Transverse colon (tissue), 4 donors: ENCODE measurements at regions of chr10 and their contacts with region 1.

Region 1: DNA sequence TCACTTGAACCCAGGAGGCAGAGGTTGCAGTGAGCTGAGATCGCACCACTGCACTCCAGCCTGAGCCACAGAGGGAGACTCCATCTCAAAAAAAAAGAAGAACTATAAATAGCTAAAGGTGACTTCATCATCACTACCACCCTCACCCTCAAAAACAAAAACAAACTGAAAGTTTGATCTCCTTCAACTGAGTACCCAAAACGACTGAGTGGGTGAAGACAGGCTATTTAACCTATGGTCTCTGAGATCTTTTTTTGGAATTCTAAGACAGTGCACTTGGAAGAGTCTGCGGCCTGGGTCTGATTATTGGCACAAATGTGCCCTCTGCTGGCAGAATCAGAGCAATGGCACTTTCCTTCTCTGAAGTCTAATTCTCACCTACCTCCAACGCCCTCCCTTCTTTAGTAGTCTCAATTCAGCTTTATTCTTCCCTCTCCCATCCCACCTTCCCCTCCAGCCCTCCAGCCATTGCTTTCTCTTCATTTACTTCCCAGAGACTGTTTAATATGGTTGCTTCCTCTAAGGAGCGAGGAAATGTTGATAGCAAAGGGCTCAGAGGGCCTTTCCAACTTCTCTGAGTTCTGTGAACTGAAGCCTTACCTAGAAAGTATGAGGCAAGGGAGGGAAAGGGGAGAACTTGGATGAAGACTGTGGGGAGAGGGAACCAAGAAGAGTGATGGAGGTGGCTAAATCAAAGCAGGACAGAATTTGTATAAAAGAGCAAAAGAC is 2.9 kb upstream of the MYOZ1 start:
- DNase-seq: peak; percentile 64
- H3K4me3 ChIP-seq: no peak overlapping the region
- H3K27ac ChIP-seq: no peak overlapping the region
- H3K4me1 ChIP-seq: peaks cover 0 to 32% (median 16%) of the 10 kb centered on the region in 4 donors
- H3K27me3 ChIP-seq: no peaks in the 10 kb centered on the region
- CTCF ChIP-seq: peak; percentile 82 to 97 (median 88)
- EP300 ChIP-seq: no peak
- POLR2A ChIP-seq: no peak

Region 2: DNA sequence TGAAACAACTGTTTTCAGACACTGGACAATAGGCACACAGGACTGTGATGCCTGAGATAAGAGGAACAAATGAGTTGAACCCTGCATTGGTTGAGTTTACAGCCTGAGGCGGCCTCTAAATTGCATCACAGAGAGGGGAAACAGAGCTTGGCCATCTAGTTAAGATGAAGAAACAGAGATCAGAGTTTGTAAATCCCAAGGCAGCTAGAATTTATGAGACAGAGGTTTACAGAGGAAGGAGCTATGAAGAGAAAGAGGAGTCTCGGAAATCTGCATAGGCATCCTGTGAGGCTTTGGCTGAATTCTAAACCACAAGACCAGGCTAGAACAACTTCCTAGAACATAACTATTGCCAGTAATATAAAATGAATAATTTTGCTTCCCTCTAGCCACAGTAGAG is 791.7 kb before region 1 on chr10:
- in situ Hi-C with region 1: no loop called
- intact Hi-C with region 1: no loop called
- DNase-seq: no peak
- H3K4me3 ChIP-seq: no peak overlapping the region
- H3K27ac ChIP-seq: no peak overlapping the region
- H3K4me1 ChIP-seq: no peaks in the 10 kb centered on the region
- H3K27me3 ChIP-seq: no peaks in the 10 kb centered on the region
- CTCF ChIP-seq: no peak
- EP300 ChIP-seq: no peak
- POLR2A ChIP-seq: no peak

Region 3: DNA sequence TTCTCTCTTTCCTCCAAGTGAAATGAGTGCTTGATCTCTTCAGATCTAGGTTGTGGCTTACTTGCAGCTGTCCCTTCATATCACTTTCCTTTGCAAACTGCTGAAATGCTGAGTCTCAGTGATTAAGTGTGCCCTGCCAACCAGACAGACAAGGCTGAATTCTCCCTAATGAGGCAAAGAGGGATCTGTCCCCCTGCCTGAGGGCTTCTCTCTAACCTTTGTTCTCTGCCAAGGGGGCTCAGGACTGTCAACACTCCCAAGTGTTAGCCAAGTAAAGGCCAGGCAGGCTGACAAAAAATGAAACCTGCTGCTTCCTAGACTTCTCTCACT is 210.7 kb before region 1 on chr10 and contains the start of gene MSS51:
- in situ Hi-C with region 1: no loop called
- intact Hi-C with region 1: no loop called
- DNase-seq: no peak
- H3K4me3 ChIP-seq: no peak within 1 kb of the TSS
- H3K27ac ChIP-seq: no peak within 1 kb of the TSS
- H3K4me1 ChIP-seq: no peaks in the 10 kb centered on the region
- H3K27me3 ChIP-seq: no peaks in the 10 kb centered on the region
- CTCF ChIP-seq: no peak
- EP300 ChIP-seq: no peak
- POLR2A ChIP-seq: no peak
- total RNA-seq, gene MSS51: 1.4 to 2.4 (median 2.0) TPM

Region 4: GRCh38 chr10:73501651-73502050 is 142.5 kb before region 1 on chr10:
- in situ Hi-C with region 1: no loop called
- intact Hi-C with region 1: no loop called
- DNase-seq: no peak
- H3K4me3 ChIP-seq: no peak overlapping the region
- H3K27ac ChIP-seq: no peak overlapping the region
- H3K4me1 ChIP-seq: peaks cover under 1 to 2% (median 2%) of the 10 kb centered on the region in 4 donors
- H3K27me3 ChIP-seq: no peaks in the 10 kb centered on the region
- CTCF ChIP-seq: no peak
- EP300 ChIP-seq: no peak
- POLR2A ChIP-seq: no peak

Region 5: DNA sequence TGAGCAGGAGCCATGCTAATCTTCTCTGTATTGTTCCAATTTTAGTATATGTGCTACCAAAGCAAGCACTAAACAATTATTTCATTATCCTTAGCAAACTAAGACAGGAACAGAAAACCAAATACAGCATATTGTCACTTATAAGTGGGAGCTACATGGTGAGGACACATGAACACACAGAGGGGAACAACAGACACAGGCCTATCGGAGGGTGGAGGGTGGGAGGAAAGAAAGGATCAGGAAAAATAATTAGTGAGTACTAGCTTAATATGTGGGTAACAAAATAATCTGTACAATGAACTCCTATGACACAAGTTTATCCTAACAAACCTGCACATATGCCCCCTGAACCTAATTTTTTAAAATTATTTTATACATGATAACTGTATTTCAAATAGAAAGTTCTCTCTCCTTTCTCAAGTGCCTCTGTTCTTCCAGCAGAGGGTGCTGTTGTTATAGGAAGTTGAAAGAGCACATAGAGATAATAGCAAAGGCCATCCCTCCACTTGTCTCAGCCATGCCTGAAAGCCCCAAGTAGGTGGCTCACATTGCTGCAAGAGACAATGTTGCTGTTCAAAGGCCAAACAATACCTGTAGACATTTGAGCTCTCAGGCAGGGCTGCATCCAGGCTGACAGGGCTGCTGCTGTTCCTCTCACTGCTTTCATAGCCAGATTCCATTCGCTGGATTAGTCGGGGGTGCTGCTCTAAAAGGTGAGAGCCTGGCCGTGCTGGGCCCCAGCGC is 114.9 kb before region 1 on chr10:
- in situ Hi-C with region 1: loop called (anchors 5 kb)
- intact Hi-C with region 1: loop called (anchors 2 kb)
- DNase-seq: peak; percentile 46
- H3K4me3 ChIP-seq: no peak overlapping the region
- H3K27ac ChIP-seq: peak overlapping the region in 2 of 4 donors; percentile 38 to 40
- H3K4me1 ChIP-seq: peaks cover 0 to 25% (median 6%) of the 10 kb centered on the region in 4 donors
- H3K27me3 ChIP-seq: no peaks in the 10 kb centered on the region
- CTCF ChIP-seq: peak; percentile 80 to 89 (median 86)
- EP300 ChIP-seq: no peak
- POLR2A ChIP-seq: no peak

Region 6: DNA sequence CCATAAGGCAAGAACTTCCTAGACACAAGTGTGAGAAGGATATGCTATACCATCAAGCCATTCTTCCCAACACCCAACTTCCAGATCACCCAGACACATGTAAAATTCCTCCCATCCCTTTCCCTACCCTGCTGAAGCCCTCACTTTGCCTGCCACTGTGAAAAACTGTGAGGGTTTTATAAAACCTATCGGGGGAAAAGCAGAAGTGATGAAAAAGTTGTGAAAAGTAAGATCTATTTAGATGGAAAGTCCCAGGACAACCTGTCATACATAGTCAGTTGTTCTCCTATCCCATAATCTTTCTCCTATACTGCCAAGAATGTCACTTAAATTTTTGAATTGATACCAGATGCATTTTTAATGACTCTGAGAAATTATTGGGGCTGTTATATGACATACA is 109.3 kb before region 1 on chr10:
- in situ Hi-C with region 1: loop called in 3 of 4 experiments (anchors 5 kb)
- intact Hi-C with region 1: loop called (anchors 2 kb)
- DNase-seq: no peak
- H3K4me3 ChIP-seq: no peak overlapping the region
- H3K27ac ChIP-seq: no peak overlapping the region
- H3K4me1 ChIP-seq: peaks cover 0 to 22% (median 6%) of the 10 kb centered on the region in 4 donors
- H3K27me3 ChIP-seq: no peaks in the 10 kb centered on the region
- CTCF ChIP-seq: no peak
- EP300 ChIP-seq: no peak
- POLR2A ChIP-seq: no peak